ACHN (cell line): ENCODE measurements at regions of chr22 and their contacts with region 1.

Region 1: DNA sequence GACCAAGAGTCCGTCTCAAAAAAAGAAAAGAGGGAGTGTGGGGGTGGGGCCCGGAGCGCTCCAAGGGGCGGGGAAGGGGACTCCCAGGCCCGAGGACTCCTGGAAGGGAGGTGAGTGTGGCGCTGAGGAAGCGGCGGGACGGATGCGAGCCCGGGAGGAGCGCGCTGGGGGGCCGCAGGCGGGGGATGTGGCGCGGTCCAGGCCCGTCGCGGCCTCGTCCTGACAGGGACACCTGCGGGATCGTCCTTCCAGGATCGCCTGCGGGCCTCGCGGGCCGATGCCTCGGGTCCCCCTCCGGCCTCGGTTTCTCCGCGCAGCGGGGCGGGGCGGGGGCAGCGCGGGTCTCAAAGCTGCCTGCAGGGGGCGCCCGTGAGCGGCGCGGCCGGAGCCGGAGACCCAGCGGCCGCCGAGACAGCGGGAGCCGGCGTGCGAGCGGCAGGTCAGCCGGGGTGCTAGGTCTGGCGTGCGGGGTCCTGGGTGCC is 3.8 kb upstream of the ADORA2A start:
- DNase-seq: peak; percentile 32

Region 2: GRCh38 chr22:24503137-24503842 is 79.7 kb after region 1 on chr22:
- in situ Hi-C with region 1: loop called (anchors 25 kb)
- DNase-seq: peak; percentile 57

Region 3: DNA sequence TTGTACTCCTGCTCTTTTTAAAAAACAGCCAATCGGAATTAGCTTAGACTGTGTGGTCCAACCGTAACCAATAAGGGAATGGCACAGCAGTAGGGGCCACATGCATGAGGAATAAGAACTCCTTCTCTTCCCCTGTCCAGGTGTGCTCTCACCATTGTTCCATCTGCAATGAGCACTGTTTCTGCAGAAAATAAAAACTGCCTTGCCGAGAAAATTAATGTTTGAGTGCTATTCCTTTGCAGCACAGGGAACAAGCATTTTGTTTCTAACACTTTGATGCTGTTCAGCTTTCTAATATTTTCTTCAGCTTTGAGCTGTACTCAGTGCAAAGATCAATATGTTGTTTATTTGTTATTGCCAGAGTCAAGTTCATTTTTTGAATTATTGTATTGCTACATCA is 293.0 kb after region 1 on chr22:
- in situ Hi-C with region 1: no loop called
- DNase-seq: no peak